Right cardiac atrium (tissue), 5 donors: ENCODE measurements at regions of chr5 and their contacts with region 1.

Region 1: DNA sequence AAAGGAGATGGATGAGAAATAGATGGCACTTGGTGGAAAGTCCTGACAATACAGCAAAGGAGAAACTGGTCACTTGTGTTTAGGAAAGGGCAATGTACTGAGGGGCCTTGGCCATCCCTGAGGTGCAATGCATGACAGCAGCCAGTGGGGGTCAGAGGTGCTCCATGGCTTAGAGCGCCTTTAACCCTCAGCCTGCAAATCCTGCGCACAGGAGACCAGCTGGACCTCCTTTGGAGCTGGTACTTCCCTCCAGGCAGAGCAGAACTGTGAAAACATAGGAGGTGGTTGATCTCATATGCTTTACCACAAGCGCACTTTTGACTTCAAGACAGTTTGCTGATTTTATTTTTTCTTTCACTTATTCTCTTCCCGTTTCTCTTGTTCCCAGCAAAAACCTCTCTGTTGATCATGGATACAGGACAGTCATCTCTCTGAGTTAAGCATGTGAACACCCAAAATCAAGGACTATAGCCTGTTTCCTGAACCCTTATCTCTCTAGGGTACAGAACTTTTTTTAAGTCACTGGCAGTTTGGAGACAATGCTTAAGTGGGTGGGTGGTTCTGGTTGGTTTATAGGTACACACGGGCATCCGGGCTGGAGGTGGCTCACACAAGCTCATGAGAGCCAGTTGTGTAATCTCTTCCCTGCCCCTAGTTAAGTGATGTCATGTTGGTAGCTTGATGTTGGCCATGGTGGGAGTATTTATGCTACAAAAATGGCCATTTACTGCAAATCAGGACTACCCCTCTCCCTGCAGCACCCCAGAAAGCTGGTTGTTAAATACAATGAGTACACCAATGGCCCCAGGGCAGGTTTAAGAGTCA is 37.6 kb upstream of the ANKRD55 start:
- DNase-seq: peak; percentile 80 to 90 (median 89)
- ATAC-seq: peak; percentile 98 to 99
- H3K4me3 ChIP-seq: no peak overlapping the region
- H3K27ac ChIP-seq: no peak overlapping the region
- H3K4me1 ChIP-seq: no peaks in the 10 kb centered on the region
- H3K27me3 ChIP-seq: no peaks in the 10 kb centered on the region

Region 2: GRCh38 chr5:56323505-56323904 is 52.7 kb after region 1 on chr5:
- intact Hi-C with region 1: no loop called
- DNase-seq: no peak
- ATAC-seq: no peak
- H3K4me3 ChIP-seq: no peak overlapping the region
- H3K27ac ChIP-seq: no peak overlapping the region
- H3K4me1 ChIP-seq: no peaks in the 10 kb centered on the region
- H3K27me3 ChIP-seq: no peaks in the 10 kb centered on the region

Region 3: GRCh38 chr5:56481428-56482357 is 210.9 kb after region 1 on chr5:
- intact Hi-C with region 1: loop called in 1 of 4 experiments (anchors 10 kb)
- DNase-seq: peak; percentile 63 to 74 (median 74)
- ATAC-seq: peak; percentile 49 to 59
- H3K4me3 ChIP-seq: peak overlapping the region; percentile 96
- H3K27ac ChIP-seq: peak overlapping the region; percentile 94
- H3K4me1 ChIP-seq: peaks cover 5% of the 10 kb centered on the region
- H3K27me3 ChIP-seq: no peaks in the 10 kb centered on the region

Region 4: GRCh38 chr5:56565644-56566043 is 294.9 kb after region 1 on chr5:
- intact Hi-C with region 1: loop called in 1 of 4 experiments (anchors 10 kb)
- DNase-seq: no peak
- ATAC-seq: peak; percentile 26 to 40
- H3K4me3 ChIP-seq: no peak overlapping the region
- H3K27ac ChIP-seq: no peak overlapping the region
- H3K4me1 ChIP-seq: peaks cover 2% of the 10 kb centered on the region
- H3K27me3 ChIP-seq: no peaks in the 10 kb centered on the region

Region 5: GRCh38 chr5:56838409-56839039 is 567.7 kb after region 1 on chr5:
- intact Hi-C with region 1: loop called (anchors 2 to 5 kb)
- DNase-seq: peak in 1 of 3 donors; percentile 18
- ATAC-seq: peak; percentile 59 to 63
- H3K4me3 ChIP-seq: no peak overlapping the region
- H3K27ac ChIP-seq: no peak overlapping the region
- H3K4me1 ChIP-seq: peaks cover 7% of the 10 kb centered on the region
- H3K27me3 ChIP-seq: no peaks in the 10 kb centered on the region